ENCODE measurements at regions of chr20 and their contacts with region 1.

Region 1: DNA sequence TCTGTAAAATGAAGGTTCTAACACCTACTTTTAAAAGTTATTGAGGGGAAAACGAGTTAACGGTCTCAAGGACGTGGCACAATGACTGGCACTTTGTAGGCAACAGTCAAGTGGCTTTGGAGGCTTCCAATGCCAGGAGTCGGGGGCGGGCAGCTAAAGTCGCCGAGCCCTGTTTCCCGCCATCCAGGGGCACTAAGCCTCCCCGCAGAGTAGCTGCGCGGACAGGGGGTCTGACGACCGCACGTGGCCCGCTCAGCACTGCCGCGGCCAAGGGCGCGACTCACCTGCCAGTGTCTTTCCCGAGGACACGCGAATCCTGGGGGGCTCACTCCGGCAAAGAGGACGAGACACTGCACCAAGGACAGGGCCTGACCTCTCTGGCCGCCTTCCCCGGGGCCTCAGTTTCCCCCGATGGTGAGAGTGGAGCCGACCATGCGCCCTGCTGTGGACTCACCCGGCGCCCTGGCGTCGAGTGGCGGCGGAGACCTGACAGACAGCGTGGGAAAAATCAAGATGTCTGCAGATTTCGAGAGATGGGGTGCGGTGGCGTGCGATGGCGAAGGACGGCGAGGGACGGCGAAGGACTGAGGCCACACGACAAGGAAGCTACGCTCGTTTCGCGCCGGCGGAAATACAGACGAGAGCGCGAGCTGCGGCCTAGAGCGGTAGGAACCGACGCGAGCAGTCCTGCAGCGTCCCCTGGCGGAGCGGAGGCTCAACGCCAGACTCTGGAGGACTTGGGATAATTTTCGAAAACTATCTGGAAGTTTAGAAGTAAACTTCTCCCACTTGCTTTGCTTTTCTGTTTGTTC is at the start of gene SNHG17:
- DNase-seq: peak; percentile 93
- ATAC-seq: peak; percentile 89
- H3K4me3 Mint-ChIP-seq: peak within 1 kb of the TSS; percentile 96
- H3K27ac Mint-ChIP-seq: peak within 1 kb of the TSS; percentile 98
- H3K4me1 Mint-ChIP-seq: peaks cover 30% of the 10 kb centered on the region
- H3K27me3 Mint-ChIP-seq: peaks cover 3% of the 10 kb centered on the region
- CTCF ChIP-seq: peak; percentile 99
- total RNA-seq, gene SNHG17: 154 to 159 TPM

Region 2: DNA sequence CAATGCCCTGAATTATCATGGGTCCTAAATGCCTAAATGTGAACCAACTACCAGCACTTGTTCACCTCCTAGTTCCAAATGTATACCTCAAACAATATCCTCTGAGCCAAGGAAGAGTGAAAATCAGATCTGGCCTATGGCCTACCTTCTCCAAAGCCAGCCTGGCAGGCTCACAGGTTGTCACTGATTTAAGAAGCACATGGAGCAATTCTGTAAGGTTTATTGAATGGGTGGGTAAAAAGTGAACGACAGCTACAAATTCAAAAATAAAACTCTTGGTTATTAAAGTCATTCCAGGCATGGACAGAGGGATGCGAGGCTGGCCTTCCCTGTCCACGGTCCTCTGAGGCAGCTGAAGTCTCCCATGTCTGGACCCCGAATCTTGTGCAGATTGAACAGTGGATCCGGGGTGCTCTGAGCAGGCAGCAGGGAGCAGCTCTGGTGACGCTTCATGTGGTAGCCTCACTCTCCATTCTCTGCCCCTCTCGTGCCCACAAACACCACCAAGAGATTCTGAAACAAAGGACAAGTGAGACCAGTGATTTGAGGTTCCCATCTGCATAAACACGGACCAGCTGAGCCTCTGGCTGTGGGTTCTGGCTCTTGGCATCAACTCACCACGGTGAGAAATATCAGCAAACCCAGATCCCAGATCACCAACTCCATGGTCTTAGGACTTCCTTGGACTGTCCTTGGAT is 14.4 kb before region 1 on chr20:
- CTCF ChIA-PET with region 1: interaction called, 15 read pairs
- POLR2A ChIA-PET with region 1: interaction called, 279 read pairs
- intact Hi-C with region 1: no loop called
- DNase-seq: no peak
- ATAC-seq: no peak
- H3K4me3 Mint-ChIP-seq: no peak overlapping the region
- H3K27ac Mint-ChIP-seq: no peak overlapping the region
- H3K4me1 Mint-ChIP-seq: peaks cover 18% of the 10 kb centered on the region
- H3K27me3 Mint-ChIP-seq: no peaks in the 10 kb centered on the region
- CTCF ChIP-seq: no peak

Region 3: GRCh38 chr20:38446441-38447209 is 11.7 kb after region 1 on chr20:
- CTCF ChIA-PET with region 1: interaction called, 101 read pairs
- POLR2A ChIA-PET with region 1: interaction called, 165 read pairs
- intact Hi-C with region 1: no loop called
- DNase-seq: peak; percentile 97
- ATAC-seq: peak; percentile 96
- H3K4me3 Mint-ChIP-seq: peak overlapping the region; percentile 78
- H3K27ac Mint-ChIP-seq: peak overlapping the region; percentile 84
- H3K4me1 Mint-ChIP-seq: peaks cover 42% of the 10 kb centered on the region
- H3K27me3 Mint-ChIP-seq: no peaks in the 10 kb centered on the region
- CTCF ChIP-seq: peak; percentile 99

Region 4: GRCh38 chr20:38453941-38454340 is 19.0 kb after region 1 on chr20:
- CTCF ChIA-PET with region 1: interaction called, 10 read pairs
- POLR2A ChIA-PET with region 1: interaction called, 165 read pairs
- intact Hi-C with region 1: no loop called
- DNase-seq: no peak
- ATAC-seq: no peak
- H3K4me3 Mint-ChIP-seq: no peak overlapping the region
- H3K27ac Mint-ChIP-seq: no peak overlapping the region
- H3K4me1 Mint-ChIP-seq: peaks cover 21% of the 10 kb centered on the region
- H3K27me3 Mint-ChIP-seq: no peaks in the 10 kb centered on the region
- CTCF ChIP-seq: no peak

Region 5: GRCh38 chr20:38466983-38467382 is 32.0 kb after region 1 on chr20:
- CTCF ChIA-PET with region 1: interaction called, 20 read pairs
- POLR2A ChIA-PET with region 1: interaction called, 47 read pairs
- intact Hi-C with region 1: loop called (anchors 2 kb)
- DNase-seq: no peak
- ATAC-seq: no peak
- H3K4me3 Mint-ChIP-seq: no peak overlapping the region
- H3K27ac Mint-ChIP-seq: no peak overlapping the region
- H3K4me1 Mint-ChIP-seq: peaks cover 3% of the 10 kb centered on the region
- H3K27me3 Mint-ChIP-seq: no peaks in the 10 kb centered on the region
- CTCF ChIP-seq: no peak

Region 6: DNA sequence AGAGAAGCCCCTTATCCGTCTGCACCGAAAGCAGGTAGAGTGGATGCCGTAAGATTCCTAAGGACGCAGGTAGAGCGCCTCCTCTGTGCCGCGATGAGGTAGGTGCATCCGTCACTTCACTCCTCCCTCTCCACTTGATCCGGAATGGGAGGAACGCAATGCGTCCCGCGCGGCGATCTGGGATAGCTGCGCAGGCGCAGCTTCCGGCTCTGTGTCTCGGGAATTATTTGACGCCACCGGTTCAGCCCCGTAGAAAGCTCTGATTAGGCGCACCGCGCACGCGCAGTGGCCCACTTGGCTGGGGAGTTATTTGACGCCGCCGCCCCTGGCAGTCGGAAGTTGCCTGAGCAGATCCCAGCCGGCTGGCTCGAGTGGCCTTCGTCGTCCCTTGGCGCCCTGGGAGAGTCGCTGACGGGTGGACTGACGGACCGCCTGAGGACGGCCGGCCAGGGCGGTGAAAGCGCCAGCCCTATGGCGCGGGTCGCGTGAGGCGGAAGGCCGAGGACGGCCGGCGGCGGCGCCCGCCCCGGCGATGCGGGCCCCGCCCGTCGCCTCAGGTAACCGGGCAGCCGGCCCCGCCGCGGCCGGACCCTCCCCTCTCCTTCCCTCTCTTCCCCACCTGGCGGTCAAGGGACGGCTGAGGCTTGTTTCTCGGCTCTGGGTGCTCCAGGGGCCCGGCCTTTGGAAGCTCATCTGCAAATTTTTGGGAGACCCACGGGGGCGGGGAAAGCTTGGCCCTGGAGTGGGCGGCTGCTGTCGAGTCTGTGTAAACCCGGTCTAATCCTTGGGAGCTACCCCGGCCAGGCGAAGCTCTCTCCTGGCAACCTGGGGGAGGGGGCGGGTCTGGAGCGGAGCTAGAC is 37.8 kb after region 1 on chr20 and contains the start of gene RALGAPB:
- CTCF ChIA-PET with region 1: interaction called, 20 read pairs
- POLR2A ChIA-PET with region 1: interaction called, 47 read pairs
- intact Hi-C with region 1: loop called (anchors 2 kb)
- DNase-seq: peak; percentile 98
- ATAC-seq: peak; percentile 97
- H3K4me3 Mint-ChIP-seq: peak within 1 kb of the TSS; percentile 80
- H3K27ac Mint-ChIP-seq: peak within 1 kb of the TSS; percentile 82
- H3K4me1 Mint-ChIP-seq: peaks cover 46% of the 10 kb centered on the region
- H3K27me3 Mint-ChIP-seq: no peaks in the 10 kb centered on the region
- CTCF ChIP-seq: peak; percentile 3
- total RNA-seq, gene RALGAPB: 19.8 to 21.3 TPM

Region 7: GRCh38 chr20:38477747-38478146 is 42.8 kb after region 1 on chr20:
- CTCF ChIA-PET with region 1: interaction called, 20 read pairs
- POLR2A ChIA-PET with region 1: interaction called, 47 read pairs
- intact Hi-C with region 1: loop called (anchors 2 kb)
- DNase-seq: no peak
- ATAC-seq: no peak
- H3K4me3 Mint-ChIP-seq: no peak overlapping the region
- H3K27ac Mint-ChIP-seq: no peak overlapping the region
- H3K4me1 Mint-ChIP-seq: peaks cover 54% of the 10 kb centered on the region
- H3K27me3 Mint-ChIP-seq: no peaks in the 10 kb centered on the region
- CTCF ChIP-seq: no peak

Measured in activated CD8-positive, alpha-beta T cell treated with anti-CD3 and anti-CD28 coated beads for 36 hours (primary cell).